ENCODE measurements at regions of chr19 and their contacts with region 1.

Region 1: DNA sequence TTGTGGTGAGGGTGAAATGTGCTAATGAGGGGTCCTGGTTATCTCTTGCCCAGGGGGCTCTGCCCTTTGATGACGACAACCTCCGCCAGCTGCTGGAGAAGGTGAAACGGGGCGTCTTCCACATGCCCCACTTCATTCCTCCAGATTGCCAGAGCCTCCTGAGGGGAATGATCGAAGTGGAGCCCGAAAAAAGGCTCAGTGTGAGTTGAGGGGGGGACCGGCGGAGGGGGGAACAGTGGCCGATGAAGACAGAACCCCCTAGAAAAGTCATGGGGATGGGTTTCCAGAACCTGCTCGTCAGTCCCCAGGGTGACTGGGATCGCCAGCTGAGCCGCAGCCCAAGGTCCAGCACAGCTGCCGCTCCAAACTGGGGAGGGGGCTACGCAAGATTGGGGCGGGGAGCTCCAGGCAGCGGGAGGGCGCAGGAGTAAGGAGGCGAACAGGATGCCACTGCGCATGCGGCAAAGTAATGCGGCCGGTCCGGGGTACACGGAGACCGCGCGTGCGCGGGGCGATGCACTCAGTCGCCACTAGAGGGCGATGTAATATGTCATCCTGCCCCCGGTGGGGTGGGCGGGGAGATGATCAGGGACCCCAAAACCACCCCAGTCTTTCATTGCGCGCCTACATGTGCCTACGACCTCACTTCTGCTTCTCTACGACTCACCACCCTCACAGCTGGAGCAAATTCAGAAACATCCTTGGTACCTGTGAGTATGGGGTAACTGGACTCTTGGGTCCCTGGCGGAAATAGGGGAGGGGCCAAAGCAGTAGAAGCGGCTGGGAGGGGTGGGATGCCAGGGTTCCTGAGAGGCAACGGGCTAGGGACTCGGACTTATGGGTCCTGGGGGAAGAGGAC is 17.9 kb downstream of the BRSK1 start:
- DNase-seq: peak; percentile 80 to 90 (median 85)
- H3K4me3 ChIP-seq: peak overlapping the region in 55 of 59 donors; percentile 7 to 61 (median 41)
- H3K27ac ChIP-seq: peak overlapping the region in 57 of 59 donors; percentile 5 to 92 (median 81)
- H3K27me3 ChIP-seq: no peaks in the 10 kb centered on the region
- CTCF ChIP-seq: peak in 55 of 56 donors; percentile 97 to 100 (median 99)

Region 2: GRCh38 chr19:55227241-55228014 is 74.3 kb before region 1 on chr19:
- intact Hi-C with region 1: no loop called
- DNase-seq: no peak
- H3K4me3 ChIP-seq: no peak overlapping the region
- H3K27ac ChIP-seq: peak overlapping the region in 9 of 59 donors; percentile 1 to 44 (median 21)
- H3K27me3 ChIP-seq: no peaks in the 10 kb centered on the region
- CTCF ChIP-seq: no peak

Region 3: DNA sequence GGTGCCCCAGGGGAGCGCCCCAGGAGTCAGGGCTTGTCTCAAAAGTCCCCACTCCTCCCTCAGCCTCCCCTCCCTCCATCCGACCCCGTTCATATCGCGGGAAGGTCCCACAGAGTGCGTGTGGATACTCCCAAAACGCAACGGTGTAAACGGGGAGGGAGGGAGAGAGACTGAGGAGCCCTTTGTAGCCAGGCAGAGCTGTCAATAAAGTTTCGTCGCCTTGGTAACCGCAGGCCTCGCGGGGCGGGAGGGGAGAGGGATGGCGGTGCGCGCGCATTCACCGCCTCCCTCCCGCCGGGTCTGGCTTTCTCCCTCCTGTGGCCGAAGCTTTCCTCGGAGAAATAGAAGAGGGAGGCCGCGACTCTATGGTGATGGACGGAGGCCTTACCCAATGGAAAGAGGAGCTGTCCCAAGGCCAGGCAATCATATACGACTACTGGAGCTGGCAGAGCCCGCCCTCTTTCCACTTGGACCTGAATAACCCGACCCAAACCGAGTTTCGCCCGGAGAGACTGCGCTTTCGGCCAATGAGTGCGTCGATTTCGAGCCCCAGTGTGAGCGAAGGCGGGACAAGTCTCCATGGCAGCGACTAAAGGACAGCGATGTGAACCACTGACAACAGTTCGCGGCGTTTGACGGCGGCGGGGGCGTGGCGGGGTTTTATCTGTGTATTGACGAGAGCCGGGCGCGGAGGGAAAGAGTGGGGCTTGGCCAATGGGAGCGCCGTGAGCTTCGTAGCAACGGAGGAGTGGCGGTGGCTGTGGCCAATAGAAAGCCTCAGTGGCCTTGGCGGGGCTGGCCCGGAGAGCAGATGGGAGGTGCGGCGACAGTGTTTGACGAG is 37.6 kb after region 1 on chr19 and contains the start of gene KMT5C:
- intact Hi-C with region 1: loop called (anchors 2 to 5 kb)
- DNase-seq: peak; percentile 100
- H3K4me3 ChIP-seq: peak within 1 kb of the TSS; percentile 53 to 84 (median 74)
- H3K27ac ChIP-seq: peak within 1 kb of the TSS; percentile 80 to 99 (median 95)
- H3K27me3 ChIP-seq: no peaks in the 10 kb centered on the region
- CTCF ChIP-seq: peak in 42 of 56 donors; percentile 0 to 58 (median 36)
- total RNA-seq, gene KMT5C: 9.5 to 44.0 (median 20.0) TPM

Region 4: DNA sequence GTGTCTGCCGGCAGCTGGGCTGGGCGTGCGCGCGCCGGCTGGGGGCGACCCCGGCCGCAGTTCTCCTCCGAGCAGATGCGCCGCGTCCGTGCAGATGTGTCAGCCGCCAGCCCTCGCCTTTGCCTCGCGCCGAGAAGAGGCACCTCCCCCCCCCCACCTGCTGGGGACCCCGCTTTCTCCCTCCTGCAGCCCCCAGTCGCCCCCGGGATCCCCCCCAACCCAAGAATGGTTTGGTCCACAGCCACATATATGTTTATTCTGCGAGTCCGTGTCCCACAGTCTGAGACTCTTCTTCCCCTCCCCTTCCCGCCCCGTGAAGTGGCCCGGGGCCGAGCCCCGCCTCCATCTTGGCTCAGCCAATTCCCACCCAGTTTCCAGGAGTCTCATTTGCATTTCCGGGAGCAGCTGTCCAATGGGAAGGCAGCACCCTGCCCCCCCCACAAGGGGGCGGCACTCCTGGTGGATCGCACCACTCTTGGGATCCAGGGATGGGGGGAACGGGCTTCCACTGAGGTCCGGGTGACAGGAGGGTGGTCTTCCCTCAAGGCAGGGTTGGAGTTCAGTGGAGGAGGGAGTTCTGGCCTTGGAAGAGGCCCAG is 151.2 kb after region 1 on chr19:
- intact Hi-C with region 1: loop called (anchors 2 to 10 kb)
- DNase-seq: peak; percentile 89 to 97 (median 96)
- H3K4me3 ChIP-seq: peak overlapping the region; percentile 40 to 89 (median 74)
- H3K27ac ChIP-seq: peak overlapping the region in 58 of 59 donors; percentile 33 to 96 (median 88)
- H3K27me3 ChIP-seq: peaks cover 0 to 6% (median 0%) of the 10 kb centered on the region in 45 donors
- CTCF ChIP-seq: peak in 54 of 56 donors; percentile 10 to 73 (median 50)

Measured in dorsolateral prefrontal cortex (tissue), 120 donors.